Naive thymus-derived CD4-positive, alpha-beta T cell (primary cell): ENCODE measurements at regions of chr11 and their contacts with region 1.

Region 1: GRCh38 chr11:62787005-62787759 is at the start of gene TMEM179B:
- DNase-seq: peak; percentile 87 to 98 (median 95)
- ATAC-seq: peak; percentile 83
- H3K4me3 ChIP-seq: peak within 1 kb of the TSS; percentile 82
- H3K4me3 Mint-ChIP-seq: peak within 1 kb of the TSS; percentile 93 to 97 (median 96)
- H3K27ac ChIP-seq: peak within 1 kb of the TSS; percentile 93
- H3K27ac Mint-ChIP-seq: peak within 1 kb of the TSS; percentile 91 to 99 (median 96)
- H3K4me1 ChIP-seq: peaks cover 32 to 38% of the 10 kb centered on the region in 2 donors
- H3K4me1 Mint-ChIP-seq: peaks cover 22 to 59% (median 42%) of the 10 kb centered on the region in 7 donors
- H3K27me3 ChIP-seq: no peaks in the 10 kb centered on the region
- H3K27me3 Mint-ChIP-seq: no peaks in the 10 kb centered on the region
- total RNA-seq, gene TMEM179B: 23.2 to 72.3 (median 50.9) TPM

Region 2: DNA sequence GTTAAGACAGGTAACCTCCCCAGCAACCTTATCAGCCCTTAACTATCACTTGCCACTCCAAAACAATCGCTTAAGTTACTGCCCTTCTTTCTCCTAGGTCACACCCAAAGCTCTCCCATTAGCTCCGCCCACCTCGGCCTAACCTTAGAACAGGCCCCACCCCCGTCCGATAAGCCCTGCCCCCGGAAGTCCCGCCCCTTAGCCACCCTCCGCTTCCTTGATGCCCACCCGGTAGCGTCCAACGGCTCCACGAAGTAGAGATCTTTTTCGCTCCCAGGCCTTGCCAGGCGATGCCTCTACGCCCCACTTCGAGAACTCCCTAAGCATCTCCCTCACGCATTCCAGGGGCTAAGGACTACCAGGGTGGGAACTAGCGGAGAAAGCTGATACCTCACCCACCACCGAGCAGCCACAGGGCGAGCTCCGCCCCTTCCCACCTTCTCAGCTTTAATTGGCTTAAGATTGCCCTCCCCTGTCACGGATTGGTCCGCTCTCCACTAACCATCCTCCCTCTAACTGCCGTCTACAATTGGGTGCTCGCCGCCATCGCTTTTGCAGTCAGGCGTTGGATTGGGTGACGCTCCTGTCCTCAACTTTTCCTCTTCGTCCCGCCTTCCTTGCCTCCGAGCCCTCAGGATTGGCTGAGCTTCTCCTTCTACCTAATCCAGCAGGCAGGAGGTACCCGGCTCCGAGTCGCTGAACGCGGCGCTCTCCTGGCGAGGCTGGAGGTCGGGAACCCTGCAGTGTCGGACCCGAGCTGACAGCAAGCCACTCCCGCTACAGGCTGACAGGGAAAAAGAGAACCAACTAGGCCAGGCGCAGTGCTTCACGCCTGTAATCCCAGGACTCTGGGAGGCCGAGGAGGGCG is 33.2 kb before region 1 on chr11 and contains the start of gene ZBTB3:
- CTCF ChIA-PET with region 1: interaction called, 17 read pairs
- POLR2A ChIA-PET with region 1: interaction called, 100 read pairs
- intact Hi-C with region 1: loop called (anchors 1 kb)
- DNase-seq: peak; percentile 89 to 99 (median 98)
- ATAC-seq: peak; percentile 96
- H3K4me3 ChIP-seq: peak within 1 kb of the TSS; percentile 94
- H3K4me3 Mint-ChIP-seq: peak within 1 kb of the TSS; percentile 86 to 100 (median 98)
- H3K27ac ChIP-seq: peak within 1 kb of the TSS; percentile 83
- H3K27ac Mint-ChIP-seq: peak within 1 kb of the TSS; percentile 93 to 99 (median 95)
- H3K4me1 ChIP-seq: peaks cover 15 to 16% of the 10 kb centered on the region in 2 donors
- H3K4me1 Mint-ChIP-seq: peaks cover 9 to 41% (median 29%) of the 10 kb centered on the region in 7 donors
- H3K27me3 ChIP-seq: no peaks in the 10 kb centered on the region
- H3K27me3 Mint-ChIP-seq: no peaks in the 10 kb centered on the region
- total RNA-seq, gene ZBTB3: 6.4 to 24.1 (median 19.0) TPM

Region 3: DNA sequence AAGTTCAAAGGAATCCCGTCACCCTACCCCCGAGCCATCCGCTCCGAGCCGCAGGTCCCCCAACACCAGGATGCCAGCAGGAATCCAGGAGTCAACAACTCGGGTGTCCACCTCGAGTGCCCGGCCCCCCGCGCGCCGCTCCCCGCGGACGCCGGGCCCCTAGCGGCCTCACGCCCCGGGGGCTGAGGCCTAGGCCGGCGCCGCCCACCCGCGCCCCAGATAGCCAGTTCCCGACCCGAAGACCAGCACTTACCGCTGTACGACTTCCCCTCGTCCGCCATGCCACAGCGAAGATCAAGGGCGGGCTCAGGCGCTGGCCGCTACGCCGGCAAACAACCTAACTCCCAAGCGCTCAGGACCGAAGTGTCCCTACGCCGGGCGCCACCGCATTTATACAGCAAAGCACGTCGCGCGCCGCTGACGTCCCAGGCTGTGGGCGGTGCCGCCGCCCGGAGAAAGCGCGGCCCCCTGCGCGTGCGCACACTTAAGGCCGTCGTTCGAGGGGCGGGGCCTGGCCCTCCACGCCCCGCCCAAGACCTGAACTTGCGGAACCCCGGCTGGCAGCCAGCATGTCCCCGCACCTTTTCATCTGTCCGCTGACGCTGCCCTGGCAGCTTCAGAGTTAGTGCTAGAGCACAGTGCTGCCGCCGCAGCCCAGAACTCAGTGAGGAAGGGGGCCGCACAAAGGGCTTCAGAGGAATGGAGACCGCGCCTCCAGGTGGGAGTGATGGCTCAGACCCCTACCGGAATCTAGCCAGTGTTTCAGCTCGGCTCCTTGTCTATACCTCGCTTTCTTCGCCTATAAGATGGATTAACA is 18.1 kb after region 1 on chr11 and contains the start of gene NXF1:
- CTCF ChIA-PET with region 1: interaction called, 5 read pairs
- POLR2A ChIA-PET with region 1: interaction called, 224 read pairs
- intact Hi-C with region 1: loop called (anchors 1 kb)
- DNase-seq: peak; percentile 91 to 99 (median 97)
- ATAC-seq: peak; percentile 92
- H3K4me3 ChIP-seq: peak within 1 kb of the TSS; percentile 87
- H3K4me3 Mint-ChIP-seq: peak within 1 kb of the TSS; percentile 90 to 100 (median 99)
- H3K27ac ChIP-seq: peak within 1 kb of the TSS; percentile 97
- H3K27ac Mint-ChIP-seq: peak within 1 kb of the TSS; percentile 95 to 100 (median 99)
- H3K4me1 ChIP-seq: peaks cover 13 to 18% of the 10 kb centered on the region in 2 donors
- H3K4me1 Mint-ChIP-seq: peaks cover 17 to 55% (median 34%) of the 10 kb centered on the region in 7 donors
- H3K27me3 ChIP-seq: no peaks in the 10 kb centered on the region
- H3K27me3 Mint-ChIP-seq: peaks cover 0 to 2% (median 0%) of the 10 kb centered on the region in 5 donors
- total RNA-seq, gene NXF1: 92.1 to 421 (median 195) TPM

Region 4: DNA sequence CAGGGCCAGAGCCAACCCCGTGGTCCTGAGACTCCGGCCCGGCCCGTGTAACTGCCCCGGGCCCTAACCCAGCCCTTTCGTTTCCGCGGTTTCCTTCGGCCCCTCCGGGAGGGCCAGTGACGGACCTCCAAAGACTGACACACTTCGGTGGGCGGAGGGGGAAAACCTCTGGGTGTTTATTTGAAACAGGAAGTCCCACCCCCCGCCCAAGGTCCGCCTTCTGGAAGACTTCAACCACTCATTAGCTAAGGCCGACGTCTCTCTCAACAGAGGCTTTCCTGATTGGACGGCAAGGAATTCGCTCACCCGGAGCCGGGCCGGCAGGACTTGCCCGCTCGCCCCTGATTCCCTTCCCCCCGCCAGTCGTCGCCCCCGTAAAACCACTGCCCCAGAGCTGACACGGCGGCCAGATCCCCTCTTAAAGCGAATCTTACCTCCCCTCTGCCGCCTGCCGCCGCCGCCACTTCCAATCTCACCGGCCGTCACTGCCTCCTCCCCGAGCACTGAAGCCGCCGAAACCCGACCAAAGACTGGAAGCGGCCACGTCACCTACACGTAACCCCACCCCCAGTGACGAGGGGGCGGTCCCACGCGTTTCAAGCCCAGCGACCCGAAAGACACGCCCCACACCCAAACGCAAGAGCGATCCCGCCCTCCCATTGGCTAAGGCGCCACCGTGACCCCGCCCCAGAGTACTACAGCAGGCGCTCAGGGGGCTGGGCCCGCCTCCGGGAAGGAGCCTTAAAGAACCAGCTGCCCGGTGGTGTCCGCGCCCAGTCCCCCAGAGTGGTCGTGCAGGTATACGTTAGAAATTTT is 44.5 kb after region 1 on chr11 and contains the start of gene STX5:
- CTCF ChIA-PET with region 1: interaction called, 3 read pairs
- POLR2A ChIA-PET with region 1: interaction called, 37 read pairs
- intact Hi-C with region 1: loop called (anchors 1 kb)
- DNase-seq: peak; percentile 96 to 100 (median 99)
- ATAC-seq: peak; percentile 98
- H3K4me3 ChIP-seq: peak within 1 kb of the TSS; percentile 95
- H3K4me3 Mint-ChIP-seq: peak within 1 kb of the TSS; percentile 87 to 99 (median 96)
- H3K27ac ChIP-seq: peak within 1 kb of the TSS; percentile 99
- H3K27ac Mint-ChIP-seq: peak within 1 kb of the TSS; percentile 93 to 100 (median 99)
- H3K4me1 ChIP-seq: peaks cover 16% of the 10 kb centered on the region in 2 donors
- H3K4me1 Mint-ChIP-seq: peaks cover 15 to 57% (median 45%) of the 10 kb centered on the region in 7 donors
- H3K27me3 ChIP-seq: no peaks in the 10 kb centered on the region
- H3K27me3 Mint-ChIP-seq: no peaks in the 10 kb centered on the region
- total RNA-seq, gene STX5: 47.0 to 152 (median 57.3) TPM

Region 5: DNA sequence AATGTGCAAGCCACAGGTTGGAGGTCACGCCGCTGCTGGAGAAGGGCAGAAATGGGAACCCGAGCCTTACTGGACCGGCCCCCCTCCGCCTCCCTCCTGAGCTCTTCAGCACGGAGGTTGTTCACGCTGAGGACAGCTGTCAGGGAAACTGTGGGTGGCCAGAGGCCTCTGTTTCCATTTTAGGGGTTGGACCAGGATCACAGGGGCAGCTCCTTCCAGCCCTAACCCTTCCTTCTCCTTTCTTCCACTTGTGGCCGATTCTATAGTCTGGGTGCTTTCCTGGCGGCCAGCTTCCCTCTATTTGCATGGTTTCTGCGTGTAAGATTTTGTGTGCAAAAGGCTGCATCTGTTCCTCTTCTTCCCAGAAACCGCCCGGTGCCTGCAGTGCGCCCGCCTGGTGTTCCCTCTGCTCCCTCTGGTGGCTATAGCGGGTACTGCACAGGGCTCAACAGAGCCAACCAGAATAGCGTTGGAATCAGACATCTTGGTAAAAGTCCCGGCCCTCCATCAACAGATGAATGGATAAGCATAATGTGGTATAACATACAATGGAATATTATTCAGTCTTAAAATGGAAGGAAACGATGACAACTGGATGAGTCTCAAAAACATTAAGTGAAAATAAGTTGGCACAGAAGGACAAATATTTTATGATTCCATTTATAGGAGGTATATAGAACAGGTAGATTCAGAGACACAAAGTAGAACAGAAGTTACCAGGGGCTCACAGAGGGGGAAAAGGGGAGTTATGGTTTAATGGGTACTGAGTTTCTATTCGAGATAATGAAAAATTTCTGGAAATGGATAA is 236.9 kb after region 1 on chr11:
- CTCF ChIA-PET with region 1: no interaction called
- POLR2A ChIA-PET with region 1: no interaction called
- intact Hi-C with region 1: loop called in 1 of 2 experiments (anchors 5 kb)
- DNase-seq: peak; percentile 51 to 86 (median 72)
- ATAC-seq: peak; percentile 98
- H3K4me3 ChIP-seq: no peak overlapping the region
- H3K4me3 Mint-ChIP-seq: peak overlapping the region in 1 of 10 donors; percentile 12
- H3K27ac ChIP-seq: no peak overlapping the region
- H3K27ac Mint-ChIP-seq: no peak overlapping the region
- H3K4me1 ChIP-seq: no peaks in the 10 kb centered on the region
- H3K4me1 Mint-ChIP-seq: peaks cover 0 to 6% (median 4%) of the 10 kb centered on the region in 7 donors
- H3K27me3 ChIP-seq: no peaks in the 10 kb centered on the region
- H3K27me3 Mint-ChIP-seq: peaks cover 5 to 28% (median 19%) of the 10 kb centered on the region in 5 donors